ENCODE measurements at regions of chr4 and their contacts with region 1.

Region 1: GRCh38 chr4:177579649-177580048 is 137.4 kb upstream of the AGA start:
- DNase-seq: no peak
- ATAC-seq: no peak
- H3K4me3 ChIP-seq: no peak overlapping the region
- H3K27ac ChIP-seq: no peak overlapping the region
- H3K4me1 ChIP-seq: peaks cover 0 to 4% of the 10 kb centered on the region in 2 experiments; a peak in 2 of 4 replicates
- H3K27me3 ChIP-seq: no peaks in the 10 kb centered on the region
- CTCF ChIP-seq: peak; percentile 8 to 41 (median 31); a peak in 2 of 6 replicates
- POLR2A ChIP-seq: no peak
- RAD21 ChIP-seq: peak; percentile 67

Region 2: DNA sequence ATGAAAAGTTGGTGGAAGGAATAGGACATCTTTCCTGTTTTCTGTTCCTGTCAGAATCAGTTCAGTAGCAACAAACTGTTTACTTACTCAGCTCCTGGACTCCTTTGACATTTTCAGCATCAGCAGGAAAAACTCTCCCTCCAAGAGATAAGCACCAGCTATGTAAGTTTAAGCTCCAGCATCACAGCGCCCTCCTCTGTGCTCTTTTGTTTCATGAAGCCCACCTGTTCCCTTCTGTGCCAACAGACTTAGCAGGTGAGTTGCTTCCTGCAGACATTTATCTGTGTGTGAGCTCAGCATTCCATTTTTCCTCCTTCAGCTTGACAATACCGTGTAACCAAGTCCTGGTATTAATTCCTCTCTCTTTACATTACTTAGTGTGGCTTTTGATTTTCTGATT is 506.7 kb after region 1 on chr4:
- CTCF ChIA-PET with region 1: interaction called, 19 read pairs
- POLR2A ChIA-PET with region 1: no interaction called
- RAD21 ChIA-PET with region 1: no interaction called
- intact Hi-C with region 1: no loop called
- DNase-seq: peak; percentile 18
- ATAC-seq: peak; percentile 50; the same call in 1 of the 2 replicates
- H3K4me3 ChIP-seq: no peak overlapping the region
- H3K27ac ChIP-seq: no peak overlapping the region
- H3K4me1 ChIP-seq: no peaks in the 10 kb centered on the region
- H3K27me3 ChIP-seq: no peaks in the 10 kb centered on the region
- CTCF ChIP-seq: peak; percentile 17 to 38 (median 37); a peak in 3 of 6 replicates
- POLR2A ChIP-seq: no peak
- RAD21 ChIP-seq: peak; percentile 58

Measured in HCT116 (cell line).